Heart left ventricle (tissue), 16 donors: ENCODE measurements at regions of chr4 and their contacts with region 1.

Region 1: GRCh38 chr4:76311896-76312331 is 5.4 kb downstream of the STBD1 start:
- DNase-seq: no peak
- ATAC-seq: no peak
- H3K4me3 ChIP-seq: no peak overlapping the region
- H3K27ac ChIP-seq: no peak overlapping the region
- H3K4me1 ChIP-seq: peaks cover 0 to 27% (median 10%) of the 10 kb centered on the region in 12 donors
- H3K27me3 ChIP-seq: no peaks in the 10 kb centered on the region
- CTCF ChIP-seq: no peak
- POLR2A ChIP-seq: no peak

Region 2: DNA sequence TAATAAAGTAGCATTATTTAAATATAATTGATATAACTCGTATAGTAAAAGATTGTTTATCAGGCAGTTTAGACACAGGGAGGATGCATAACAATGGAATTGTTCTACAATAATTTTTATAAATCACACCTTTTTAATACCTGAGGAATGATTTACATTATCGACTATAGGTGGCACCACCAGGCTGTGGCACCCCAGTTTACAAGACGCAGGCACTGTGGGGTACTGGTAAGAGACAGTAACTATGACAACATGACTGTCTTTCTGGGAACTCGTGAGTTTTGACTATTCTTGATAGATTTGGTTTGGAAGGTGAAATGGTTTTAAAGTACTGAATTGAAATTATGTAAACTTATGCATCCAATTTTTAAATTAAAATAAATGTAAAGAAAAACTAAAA is 32.4 kb before region 1 on chr4:
- intact Hi-C with region 1: no loop called
- DNase-seq: no peak
- ATAC-seq: no peak
- H3K4me3 ChIP-seq: no peak overlapping the region
- H3K27ac ChIP-seq: no peak overlapping the region
- H3K4me1 ChIP-seq: peaks cover 0 to 8% (median 0%) of the 10 kb centered on the region in 12 donors
- H3K27me3 ChIP-seq: no peaks in the 10 kb centered on the region
- CTCF ChIP-seq: peak in 1 of 12 donors; percentile 16
- POLR2A ChIP-seq: no peak

Region 3: GRCh38 chr4:76377911-76378310 is 66.0 kb after region 1 on chr4:
- intact Hi-C with region 1: loop called in 3 of 10 experiments (anchors 5 to 10 kb)
- DNase-seq: no peak
- ATAC-seq: peak in 2 of 4 donors; percentile 26 to 55
- H3K4me3 ChIP-seq: no peak overlapping the region
- H3K27ac ChIP-seq: no peak overlapping the region
- H3K4me1 ChIP-seq: peaks cover 0 to 9% (median 6%) of the 10 kb centered on the region in 12 donors
- H3K27me3 ChIP-seq: no peaks in the 10 kb centered on the region
- CTCF ChIP-seq: peak in 11 of 12 donors; percentile 19 to 52 (median 41)
- POLR2A ChIP-seq: no peak